OCI-LY7 (cell line): ENCODE measurements at regions of chr6 and their contacts with region 1.

Region 1: GRCh38 chr6:57021086-57021720 is 25.3 kb upstream of the KIAA1586 start:
- DNase-seq: peak; percentile 67
- H3K4me3 ChIP-seq: no peak overlapping the region
- H3K27ac ChIP-seq: no peak overlapping the region
- H3K4me1 ChIP-seq: no peaks in the 10 kb centered on the region
- CTCF ChIP-seq: peak; percentile 81

Region 2: GRCh38 chr6:56902641-56903464 is 118.3 kb before region 1 on chr6:
- CTCF ChIA-PET with region 1: interaction called, 6 read pairs
- POLR2A ChIA-PET with region 1: no interaction called
- intact Hi-C with region 1: loop called (anchors 1 kb)
- DNase-seq: peak; percentile 57
- H3K4me3 ChIP-seq: no peak overlapping the region
- H3K27ac ChIP-seq: no peak overlapping the region
- H3K4me1 ChIP-seq: no peaks in the 10 kb centered on the region
- CTCF ChIP-seq: peak; percentile 92